ENCODE measurements at regions of chr4 and their contacts with region 1.

Region 1: DNA sequence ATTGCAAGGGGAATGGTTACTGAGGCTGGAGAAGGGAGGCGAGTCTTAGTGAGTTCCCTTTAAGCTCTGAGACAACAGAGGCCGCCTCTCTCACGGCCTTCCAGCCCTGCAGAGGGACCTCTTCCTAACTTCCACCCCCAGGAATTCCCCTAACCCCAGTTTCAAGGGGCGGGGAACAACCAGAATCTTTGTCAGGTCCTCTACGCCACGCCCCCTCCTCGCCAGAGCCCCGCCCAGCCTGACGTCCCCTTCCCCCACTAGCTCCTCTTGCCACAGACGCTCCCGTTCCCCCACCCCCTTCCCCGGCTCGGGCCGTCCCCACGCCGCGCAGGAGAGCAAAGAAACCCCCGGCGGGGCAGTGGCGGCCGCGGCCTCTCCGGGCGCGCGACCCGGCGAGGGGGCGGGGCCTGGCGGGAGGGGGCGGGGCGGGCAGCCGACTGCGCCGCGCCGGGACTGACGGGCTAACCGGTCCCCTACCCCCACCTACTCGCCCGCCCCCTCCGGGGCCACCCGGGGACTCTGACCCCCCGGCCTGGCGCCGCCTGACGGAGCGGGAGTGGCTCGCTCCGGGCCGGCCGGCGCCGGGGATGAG is 12.3 kb upstream of the TMEM156 start:
- DNase-seq: peak; percentile 87 to 99 (median 94)
- ATAC-seq: peak; percentile 83
- H3K4me3 ChIP-seq: peak overlapping the region; percentile 72
- H3K4me3 Mint-ChIP-seq: peak overlapping the region; percentile 98
- H3K27ac ChIP-seq: peak overlapping the region; percentile 85 to 86
- H3K27ac Mint-ChIP-seq: peak overlapping the region; percentile 97
- H3K4me1 ChIP-seq: peaks cover 36% of the 10 kb centered on the region
- H3K4me1 Mint-ChIP-seq: peaks cover 54% of the 10 kb centered on the region
- H3K27me3 ChIP-seq: no peaks in the 10 kb centered on the region
- H3K27me3 Mint-ChIP-seq: no peaks in the 10 kb centered on the region
- CTCF ChIP-seq: no peak

Region 2: GRCh38 chr4:37686373-37687193 is 1357.9 kb before region 1 on chr4 and contains the start of gene RELL1:
- CTCF ChIA-PET with region 1: no interaction called
- POLR2A ChIA-PET with region 1: no interaction called
- intact Hi-C with region 1: loop called in 1 of 2 experiments (anchors 10 kb)
- DNase-seq: peak; percentile 95 to 100 (median 98)
- ATAC-seq: peak; percentile 81
- H3K4me3 ChIP-seq: peak within 1 kb of the TSS; percentile 78
- H3K4me3 Mint-ChIP-seq: peak within 1 kb of the TSS; percentile 99
- H3K27ac ChIP-seq: peak within 1 kb of the TSS; percentile 88 to 90
- H3K27ac Mint-ChIP-seq: peak within 1 kb of the TSS; percentile 99
- H3K4me1 ChIP-seq: peaks cover 32% of the 10 kb centered on the region
- H3K4me1 Mint-ChIP-seq: peaks cover 43% of the 10 kb centered on the region
- H3K27me3 ChIP-seq: no peaks in the 10 kb centered on the region
- H3K27me3 Mint-ChIP-seq: no peaks in the 10 kb centered on the region
- CTCF ChIP-seq: no peak
- total RNA-seq, gene RELL1: 48.6 to 50.3 TPM

Region 3: DNA sequence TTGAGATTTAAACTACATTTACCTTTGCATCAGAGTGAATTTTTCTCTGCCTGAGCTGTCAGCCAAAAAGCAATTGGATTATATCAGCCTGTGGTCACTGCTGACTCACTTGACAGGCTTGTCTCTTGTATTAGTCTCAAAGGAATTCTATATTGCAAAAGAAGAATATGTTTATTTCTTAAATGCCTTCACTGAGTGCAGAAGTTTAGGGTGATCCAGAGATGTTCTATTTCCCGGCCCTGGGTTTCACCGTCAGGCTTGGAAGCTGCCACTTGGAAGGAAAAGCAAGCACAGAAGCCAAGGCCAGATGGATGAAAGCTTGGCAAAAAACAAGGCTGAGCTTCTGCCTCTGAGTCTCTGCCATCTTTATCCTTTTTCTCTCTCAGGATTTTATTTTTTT is 95.9 kb before region 1 on chr4:
- CTCF ChIA-PET with region 1: interaction called, 4 read pairs
- POLR2A ChIA-PET with region 1: interaction called, 13 read pairs
- intact Hi-C with region 1: loop called in 1 of 2 experiments (anchors 1 kb)
- DNase-seq: no peak
- ATAC-seq: no peak
- H3K4me3 ChIP-seq: no peak overlapping the region
- H3K4me3 Mint-ChIP-seq: no peak overlapping the region
- H3K27ac ChIP-seq: peak overlapping the region in 1 of 2 donors; percentile 23
- H3K27ac Mint-ChIP-seq: peak overlapping the region; percentile 86
- H3K4me1 ChIP-seq: peaks cover 10% of the 10 kb centered on the region
- H3K4me1 Mint-ChIP-seq: peaks cover 25% of the 10 kb centered on the region
- H3K27me3 ChIP-seq: no peaks in the 10 kb centered on the region
- H3K27me3 Mint-ChIP-seq: no peaks in the 10 kb centered on the region
- CTCF ChIP-seq: no peak

Region 4: GRCh38 chr4:39032218-39033085 is 12.0 kb before region 1 on chr4 and contains the start of gene TMEM156:
- CTCF ChIA-PET with region 1: interaction called, 7 read pairs
- POLR2A ChIA-PET with region 1: interaction called, 58 read pairs
- intact Hi-C with region 1: loop called in 1 of 2 experiments (anchors 1 kb)
- DNase-seq: peak in 6 of 14 experiments; percentile 13 to 89 (median 61)
- ATAC-seq: peak; percentile 92
- H3K4me3 ChIP-seq: peak within 1 kb of the TSS; percentile 62
- H3K4me3 Mint-ChIP-seq: peak within 1 kb of the TSS; percentile 84
- H3K27ac ChIP-seq: peak within 1 kb of the TSS; percentile 62 to 66
- H3K27ac Mint-ChIP-seq: peak within 1 kb of the TSS; percentile 99
- H3K4me1 ChIP-seq: peaks cover 23% of the 10 kb centered on the region
- H3K4me1 Mint-ChIP-seq: peaks cover 41% of the 10 kb centered on the region
- H3K27me3 ChIP-seq: no peaks in the 10 kb centered on the region
- H3K27me3 Mint-ChIP-seq: no peaks in the 10 kb centered on the region
- CTCF ChIP-seq: no peak
- total RNA-seq, gene TMEM156: 18.4 TPM

Region 5: DNA sequence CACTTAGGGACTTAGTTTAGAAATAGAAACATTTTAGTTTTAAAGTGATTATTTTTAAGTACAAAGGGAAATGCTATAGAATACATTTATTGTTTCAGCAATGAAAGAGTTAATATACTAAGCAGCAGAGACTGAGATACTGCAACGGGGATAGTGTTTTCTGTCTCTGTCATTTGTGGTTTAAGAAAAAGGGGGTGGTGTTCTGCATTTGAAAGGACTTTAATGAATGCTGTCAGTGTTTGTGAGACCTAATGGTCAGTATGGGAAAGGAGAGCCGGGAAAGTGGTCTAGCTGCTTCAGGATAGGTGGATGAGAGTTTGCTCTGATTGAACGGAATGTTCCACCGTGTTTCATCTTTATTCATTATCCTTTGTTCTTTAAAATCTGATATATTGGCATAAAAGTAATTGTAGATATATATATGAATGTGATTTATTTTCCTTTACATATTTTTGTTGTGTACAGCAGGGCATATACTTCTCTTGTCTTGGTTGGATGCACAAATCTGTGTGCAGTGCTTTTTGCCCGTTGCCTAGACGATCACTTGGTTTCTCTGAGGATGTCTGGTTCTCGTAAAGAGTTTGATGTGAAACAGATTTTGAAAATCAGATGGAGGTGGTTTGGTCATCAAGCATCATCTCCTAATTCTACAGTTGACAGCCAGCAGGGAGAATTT is 17.8 kb after region 1 on chr4 and contains the start of gene KLHL5:
- CTCF ChIA-PET with region 1: interaction called, 9 read pairs
- POLR2A ChIA-PET with region 1: interaction called, 23 read pairs
- intact Hi-C with region 1: no loop called
- DNase-seq: no peak
- ATAC-seq: no peak
- H3K4me3 ChIP-seq: no peak within 1 kb of the TSS
- H3K4me3 Mint-ChIP-seq: no peak within 1 kb of the TSS
- H3K27ac ChIP-seq: no peak within 1 kb of the TSS
- H3K27ac Mint-ChIP-seq: no peak within 1 kb of the TSS
- H3K4me1 ChIP-seq: no peaks in the 10 kb centered on the region
- H3K4me1 Mint-ChIP-seq: peaks cover 36% of the 10 kb centered on the region
- H3K27me3 ChIP-seq: no peaks in the 10 kb centered on the region
- H3K27me3 Mint-ChIP-seq: no peaks in the 10 kb centered on the region
- CTCF ChIP-seq: no peak
- total RNA-seq, gene KLHL5: 17.7 to 18.6 TPM

Region 6: DNA sequence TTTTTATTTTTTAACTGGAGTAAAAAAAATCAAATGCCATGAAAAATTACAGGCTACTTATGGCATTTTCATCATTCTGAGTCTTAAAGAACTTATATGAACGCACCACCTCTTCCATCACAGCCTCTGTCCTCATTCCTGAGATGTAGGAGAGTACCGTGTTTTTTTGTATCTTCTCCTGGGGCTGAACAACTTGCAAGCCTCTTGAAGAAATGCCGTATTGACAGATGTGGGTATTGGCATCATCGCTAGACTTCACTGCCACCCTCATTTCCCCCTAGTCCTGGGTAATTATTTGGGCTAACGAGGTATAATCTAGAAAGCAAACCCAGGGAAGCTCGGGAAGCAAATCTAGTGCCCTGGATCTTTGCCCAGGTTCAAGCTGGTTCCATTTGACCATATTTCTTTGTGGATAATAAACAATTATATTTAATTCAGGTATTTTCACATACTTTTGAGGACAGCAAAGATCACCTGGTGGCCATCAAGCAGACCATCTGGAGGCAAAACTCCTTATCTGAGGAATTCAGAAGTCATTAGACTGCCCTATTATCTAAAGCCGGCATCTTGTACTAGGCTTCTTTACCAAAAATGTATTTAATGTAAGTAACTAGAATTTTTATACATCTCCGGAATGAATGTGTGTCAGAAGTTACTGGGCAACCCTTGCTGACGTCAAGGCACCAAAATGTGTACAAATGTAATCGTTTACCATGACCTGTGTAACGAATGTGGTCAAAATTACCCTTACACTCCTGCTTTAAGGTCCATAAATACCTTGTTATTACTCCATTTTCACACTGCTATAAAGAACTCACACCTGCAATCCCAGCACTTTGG is 82.0 kb after region 1 on chr4:
- CTCF ChIA-PET with region 1: no interaction called
- POLR2A ChIA-PET with region 1: no interaction called
- intact Hi-C with region 1: no loop called
- DNase-seq: no peak
- ATAC-seq: no peak
- H3K4me3 ChIP-seq: no peak overlapping the region
- H3K4me3 Mint-ChIP-seq: no peak overlapping the region
- H3K27ac ChIP-seq: no peak overlapping the region
- H3K27ac Mint-ChIP-seq: no peak overlapping the region
- H3K4me1 ChIP-seq: no peaks in the 10 kb centered on the region
- H3K4me1 Mint-ChIP-seq: no peaks in the 10 kb centered on the region
- H3K27me3 ChIP-seq: no peaks in the 10 kb centered on the region
- H3K27me3 Mint-ChIP-seq: no peaks in the 10 kb centered on the region
- CTCF ChIP-seq: no peak

Region 7: GRCh38 chr4:39181905-39182638 is 137.6 kb after region 1 on chr4 and contains the start of gene WDR19:
- CTCF ChIA-PET with region 1: no interaction called
- POLR2A ChIA-PET with region 1: interaction called, 3 read pairs
- intact Hi-C with region 1: loop called in 1 of 2 experiments (anchors 5 kb)
- DNase-seq: peak; percentile 95 to 100 (median 98)
- ATAC-seq: peak; percentile 93
- H3K4me3 ChIP-seq: peak within 1 kb of the TSS; percentile 94
- H3K4me3 Mint-ChIP-seq: no peak within 1 kb of the TSS
- H3K27ac ChIP-seq: peak within 1 kb of the TSS; percentile 21 to 53
- H3K27ac Mint-ChIP-seq: no peak within 1 kb of the TSS
- H3K4me1 ChIP-seq: peaks cover 16% of the 10 kb centered on the region
- H3K4me1 Mint-ChIP-seq: peaks cover 9% of the 10 kb centered on the region
- H3K27me3 ChIP-seq: no peaks in the 10 kb centered on the region
- H3K27me3 Mint-ChIP-seq: peaks cover 3% of the 10 kb centered on the region
- CTCF ChIP-seq: peak; percentile 61
- total RNA-seq, gene WDR19: 14.5 to 16.7 TPM

Region 8: DNA sequence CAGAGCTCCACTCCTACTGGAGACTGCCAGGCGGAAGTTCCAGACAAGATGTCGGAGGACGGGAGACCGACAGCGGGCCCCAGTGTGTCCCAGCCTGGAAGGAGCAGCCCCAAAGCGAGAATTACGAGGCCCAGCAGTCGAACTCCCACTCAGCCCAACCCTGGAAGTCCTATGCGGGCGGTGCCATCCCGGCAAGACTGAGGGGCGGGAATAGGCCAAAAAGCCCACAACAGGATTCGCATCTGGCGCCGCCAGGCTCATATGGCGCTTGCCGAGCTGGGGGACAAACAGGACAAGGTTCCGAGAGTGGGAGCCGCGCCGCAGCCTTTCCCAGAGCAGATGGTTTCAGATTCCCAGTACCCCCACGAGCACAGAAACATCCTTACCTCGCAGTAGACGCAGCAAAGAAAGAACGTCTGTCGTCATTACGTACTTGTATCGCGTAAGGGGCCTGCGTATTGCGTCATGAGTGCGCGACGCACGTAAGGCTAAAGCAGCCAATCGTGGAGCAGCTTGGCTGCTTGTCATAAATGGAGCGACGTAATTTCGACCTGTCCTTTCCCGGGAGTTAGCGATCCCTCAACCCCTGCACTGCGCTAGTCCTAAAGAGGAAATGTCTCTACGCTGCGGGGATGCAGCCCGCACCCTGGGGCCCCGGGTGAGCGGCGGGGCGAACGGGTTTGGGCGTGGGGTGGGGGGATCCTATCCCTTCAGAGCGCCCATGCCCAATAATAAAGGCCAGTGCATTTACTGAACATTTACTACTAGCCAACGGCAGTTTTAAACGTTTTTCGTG is 414.2 kb after region 1 on chr4 and contains the starts of genes LIAS and RPL9:
- CTCF ChIA-PET with region 1: no interaction called
- POLR2A ChIA-PET with region 1: interaction called, 3 read pairs
- intact Hi-C with region 1: loop called in 1 of 2 experiments (anchors 10 kb)
- DNase-seq: peak; percentile 86 to 98 (median 92)
- ATAC-seq: peak; percentile 78
- H3K4me3 ChIP-seq: peak within 1 kb of the TSS; percentile 68
- H3K4me3 Mint-ChIP-seq: peak within 1 kb of the TSS; percentile 96
- H3K27ac ChIP-seq: peak within 1 kb of the TSS; percentile 92 to 98
- H3K27ac Mint-ChIP-seq: peak within 1 kb of the TSS; percentile 100
- H3K4me1 ChIP-seq: peaks cover 26% of the 10 kb centered on the region
- H3K4me1 Mint-ChIP-seq: peaks cover 49% of the 10 kb centered on the region
- H3K27me3 ChIP-seq: no peaks in the 10 kb centered on the region
- H3K27me3 Mint-ChIP-seq: no peaks in the 10 kb centered on the region
- CTCF ChIP-seq: no peak
- total RNA-seq, gene LIAS: 10.0 to 10.1 TPM
- total RNA-seq, gene RPL9: 2,639 to 2,826 TPM